Activated CD4-positive, alpha-beta T cell treated with anti-CD3 and anti-CD28 coated beads, Interleukin-2, amount 10 ng/mL, durations not matched to agents 24 days and 14 days (primary cell): ENCODE measurements at regions of chr11 and their contacts with region 1.

Region 1: DNA sequence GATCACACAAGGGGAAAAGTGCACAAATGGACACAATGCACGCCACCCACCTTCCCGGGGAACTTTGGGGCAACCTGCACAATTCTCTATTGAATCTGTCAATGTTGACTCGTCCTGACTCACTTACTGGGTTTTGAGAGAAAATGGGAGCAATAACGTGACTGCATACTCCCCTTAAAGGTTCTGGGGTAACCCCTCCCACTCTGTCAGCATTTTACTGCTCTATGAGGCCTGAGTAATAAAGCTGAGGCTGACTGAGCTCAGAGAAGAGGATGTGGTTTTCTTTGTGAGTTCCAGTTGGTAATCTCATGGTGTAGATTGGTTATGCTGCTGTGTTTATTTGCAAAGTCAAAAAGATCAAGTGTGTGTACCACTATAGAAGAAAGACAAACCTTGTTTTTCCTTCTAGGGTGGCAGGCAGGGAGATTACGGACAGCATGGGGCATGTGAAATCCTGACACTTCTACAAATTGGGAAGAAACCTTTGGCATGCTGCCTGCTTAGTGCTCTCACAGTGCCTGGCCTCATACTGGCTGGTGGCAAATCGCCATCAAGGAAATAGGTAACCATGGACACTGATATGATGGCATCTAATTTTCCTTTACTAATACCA is 16.1 kb upstream of the APOA1 start:
- DNase-seq: peak; percentile 92
- H3K4me3 Mint-ChIP-seq: peak overlapping the region; percentile 72
- H3K27ac Mint-ChIP-seq: peak overlapping the region; percentile 93
- H3K4me1 Mint-ChIP-seq: peaks cover 60% of the 10 kb centered on the region
- H3K27me3 Mint-ChIP-seq: no peaks in the 10 kb centered on the region

Region 2: GRCh38 chr11:116772443-116773202 is 80.9 kb before region 1 on chr11 and contains the start of gene BUD13:
- intact Hi-C with region 1: loop called (anchors 5 kb)
- DNase-seq: peak; percentile 99
- H3K4me3 Mint-ChIP-seq: peak within 1 kb of the TSS; percentile 91
- H3K27ac Mint-ChIP-seq: peak within 1 kb of the TSS; percentile 95
- H3K4me1 Mint-ChIP-seq: peaks cover 46% of the 10 kb centered on the region
- H3K27me3 Mint-ChIP-seq: no peaks in the 10 kb centered on the region
- total RNA-seq, gene BUD13: 31.5 and 33.2 TPM in 2 replicates

Region 3: GRCh38 chr11:116835791-116836631 is 17.6 kb before region 1 on chr11:
- intact Hi-C with region 1: loop called (anchors 2 kb)
- DNase-seq: peak; percentile 93
- H3K4me3 Mint-ChIP-seq: peak overlapping the region; percentile 63
- H3K27ac Mint-ChIP-seq: peak overlapping the region; percentile 45
- H3K4me1 Mint-ChIP-seq: peaks cover 11% of the 10 kb centered on the region
- H3K27me3 Mint-ChIP-seq: peaks cover 4% of the 10 kb centered on the region

Region 4: DNA sequence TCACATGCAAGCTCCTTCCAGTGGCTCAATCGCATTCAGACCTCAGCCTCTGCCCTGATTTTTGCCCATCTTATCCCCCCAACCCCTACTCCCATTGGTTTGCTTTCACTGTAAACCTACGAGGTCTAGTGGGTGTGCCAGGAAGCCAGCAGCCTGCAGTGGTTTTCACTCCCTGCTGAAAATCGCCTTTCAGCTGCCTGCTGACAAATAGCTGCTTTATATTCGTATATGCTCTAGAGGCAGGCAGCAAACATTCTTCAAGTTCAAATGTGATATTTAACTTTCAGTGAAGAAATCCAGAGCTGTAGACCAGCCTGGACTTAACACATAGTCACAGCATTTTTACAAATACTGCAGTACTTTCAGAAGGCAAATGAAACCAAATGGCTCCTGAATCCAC is 76.6 kb after region 1 on chr11:
- intact Hi-C with region 1: loop called (anchors 1 kb)
- DNase-seq: peak; percentile 86
- H3K4me3 Mint-ChIP-seq: peak overlapping the region; percentile 88
- H3K27ac Mint-ChIP-seq: peak overlapping the region; percentile 89
- H3K4me1 Mint-ChIP-seq: peaks cover 55% of the 10 kb centered on the region
- H3K27me3 Mint-ChIP-seq: no peaks in the 10 kb centered on the region

Region 5: GRCh38 chr11:117026593-117027330 is 173.2 kb after region 1 on chr11:
- intact Hi-C with region 1: loop called (anchors 2 kb)
- DNase-seq: peak; percentile 53
- H3K4me3 Mint-ChIP-seq: peak overlapping the region; percentile 36
- H3K27ac Mint-ChIP-seq: peak overlapping the region; percentile 92
- H3K4me1 Mint-ChIP-seq: peaks cover 54% of the 10 kb centered on the region
- H3K27me3 Mint-ChIP-seq: no peaks in the 10 kb centered on the region

Region 6: DNA sequence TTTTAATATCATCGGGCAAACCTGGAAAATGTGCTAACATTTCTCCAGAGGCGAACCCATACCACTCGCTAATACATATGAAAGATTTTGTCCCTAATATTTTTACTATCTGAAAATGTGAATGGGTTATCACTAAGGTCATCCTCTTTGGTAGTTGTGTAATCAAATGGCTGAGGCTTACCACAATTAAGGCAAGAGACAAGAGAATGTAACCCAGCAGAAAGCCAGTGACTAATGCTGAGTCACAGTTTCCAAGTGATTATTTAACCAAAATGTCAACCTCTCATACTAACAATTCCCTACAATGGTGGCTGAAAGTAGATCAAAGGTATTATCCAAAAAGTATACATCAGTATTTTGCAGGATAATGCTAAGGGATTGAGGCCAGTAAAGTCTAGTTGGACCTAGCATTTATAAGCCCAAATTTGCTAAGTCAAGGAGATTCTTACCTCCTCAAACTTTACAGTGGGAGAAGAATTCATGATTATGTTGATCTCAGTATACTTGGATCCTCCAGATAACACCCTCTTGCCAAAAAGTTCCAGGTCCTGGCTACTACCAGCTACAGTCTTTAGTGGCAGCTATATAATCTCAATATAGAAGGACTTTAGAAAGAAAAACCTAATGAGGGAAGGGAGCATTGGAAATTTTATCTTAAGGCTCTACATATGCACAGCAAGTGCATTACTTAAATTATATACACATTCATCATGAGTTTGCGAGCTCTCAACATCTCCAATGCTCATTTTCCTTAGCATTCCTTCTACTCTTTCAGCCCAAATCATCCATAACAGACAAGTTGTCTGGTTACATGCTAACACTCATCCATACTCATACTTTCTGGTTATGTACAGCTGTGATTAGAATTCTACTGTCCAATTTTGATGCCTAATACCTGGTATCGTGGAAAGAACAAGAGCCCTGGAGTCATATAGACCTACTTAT is 219.2 kb after region 1 on chr11:
- intact Hi-C with region 1: loop called (anchors 2 kb)
- DNase-seq: no peak
- H3K4me3 Mint-ChIP-seq: peak overlapping the region; percentile 26
- H3K27ac Mint-ChIP-seq: peak overlapping the region; percentile 82
- H3K4me1 Mint-ChIP-seq: peaks cover 36% of the 10 kb centered on the region
- H3K27me3 Mint-ChIP-seq: no peaks in the 10 kb centered on the region

Region 7: DNA sequence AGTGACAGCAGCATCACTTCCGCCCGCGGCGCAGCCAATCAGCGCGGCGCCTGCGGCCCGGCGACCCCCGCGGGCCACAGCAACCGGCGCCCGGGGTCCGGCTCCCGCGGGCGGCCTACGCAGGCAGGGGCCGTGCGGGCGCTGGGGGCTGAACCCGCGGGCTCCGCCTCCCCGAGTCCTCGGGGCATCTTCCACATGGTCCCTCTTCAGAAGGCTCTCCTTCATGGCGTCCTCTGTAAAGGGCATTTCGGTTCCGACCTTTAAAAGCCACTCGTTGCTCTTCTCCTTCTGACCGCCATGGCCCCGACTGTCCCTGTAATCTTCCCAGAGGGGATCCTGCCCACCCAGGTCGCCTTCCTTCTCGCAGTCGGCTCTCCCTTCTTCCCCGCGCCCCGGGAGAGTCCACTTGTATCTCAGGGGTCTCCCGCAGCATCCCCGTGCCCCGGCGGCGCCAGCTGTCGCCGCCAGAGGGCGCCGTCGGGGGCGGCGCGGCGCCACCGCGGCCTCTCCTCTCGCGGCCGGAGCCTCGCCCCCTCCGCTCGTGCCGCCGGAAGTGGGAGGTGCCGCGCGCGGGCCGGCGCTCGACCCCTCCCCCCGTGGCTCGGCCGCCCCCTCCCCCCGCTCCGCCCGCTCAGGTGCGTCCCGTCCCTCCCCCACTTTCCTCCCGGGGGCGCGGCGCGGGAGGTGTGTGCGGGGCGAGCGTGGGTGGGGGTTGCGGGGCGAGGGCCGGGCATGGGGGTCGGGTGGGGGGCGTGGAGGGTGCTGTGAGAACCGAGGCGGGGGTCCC is 378.7 kb after region 1 on chr11 and contains the start of gene RNF214:
- intact Hi-C with region 1: loop called (anchors 5 kb)
- DNase-seq: peak; percentile 93
- H3K4me3 Mint-ChIP-seq: peak within 1 kb of the TSS; percentile 93
- H3K27ac Mint-ChIP-seq: peak within 1 kb of the TSS; percentile 100
- H3K4me1 Mint-ChIP-seq: peaks cover 38% of the 10 kb centered on the region
- H3K27me3 Mint-ChIP-seq: no peaks in the 10 kb centered on the region
- total RNA-seq, gene RNF214: 22.0 and 23.2 TPM in 2 replicates